Colonic mucosa (tissue), 4 donors: ENCODE measurements at regions of chr11 and their contacts with region 1.

Region 1: DNA sequence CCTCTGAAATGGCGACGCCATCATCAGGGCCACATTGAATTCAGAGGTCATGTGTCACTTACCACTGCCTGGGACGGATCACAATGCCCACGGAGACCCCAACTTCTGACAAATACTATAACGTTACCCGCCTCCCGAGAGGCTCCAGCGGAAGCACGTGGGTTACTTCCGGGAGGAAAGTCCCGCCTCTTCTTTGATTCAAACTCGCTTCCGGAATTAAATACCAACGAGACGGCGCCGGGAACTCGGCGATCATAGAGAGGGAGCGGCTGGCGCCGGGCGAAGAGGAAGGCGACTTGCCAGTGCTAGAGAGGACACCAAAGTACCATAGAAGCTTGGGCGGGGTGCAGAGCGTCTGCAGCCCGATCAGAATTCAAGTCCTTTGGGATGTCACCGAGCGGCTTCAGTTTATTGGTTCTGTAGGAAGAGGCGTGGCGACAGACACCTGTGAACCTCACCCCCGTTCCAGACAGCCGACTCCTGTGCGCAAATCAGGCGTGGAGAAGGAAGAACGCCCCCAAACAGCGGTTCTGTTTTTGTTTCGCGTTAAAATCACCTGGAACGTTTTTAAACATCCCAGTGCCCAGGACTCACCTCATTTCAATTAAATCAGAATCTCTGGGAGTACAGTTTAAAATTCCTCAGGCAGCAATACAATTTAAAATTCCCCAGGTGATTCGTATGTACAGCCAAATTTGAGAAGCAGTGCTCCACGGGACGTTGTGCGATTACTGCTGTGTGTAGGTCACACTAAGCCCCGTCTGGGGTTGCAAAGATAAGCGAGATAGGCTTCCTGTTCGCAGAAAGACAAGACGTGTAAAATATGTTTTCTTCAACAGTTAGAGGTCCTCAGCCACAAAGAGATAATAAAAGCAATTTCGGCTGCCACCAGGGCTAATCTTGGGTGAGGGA is at the start of gene TIMM10:
- DNase-seq: peak; percentile 96
- H3K4me3 ChIP-seq: peak within 1 kb of the TSS; percentile 67
- H3K27ac ChIP-seq: peak within 1 kb of the TSS; percentile 75
- H3K4me1 ChIP-seq: peaks cover 8% of the 10 kb centered on the region
- H3K27me3 ChIP-seq: no peaks in the 10 kb centered on the region
- CTCF ChIP-seq: no peak
- total RNA-seq, gene TIMM10: 54.8 to 67.1 TPM

Region 2: GRCh38 chr11:57426929-57427726 is 103.7 kb before region 1 on chr11 and contains the start of gene SLC43A3:
- intact Hi-C with region 1: no loop called
- DNase-seq: peak; percentile 76
- H3K4me3 ChIP-seq: peak within 1 kb of the TSS; percentile 47
- H3K27ac ChIP-seq: peak within 1 kb of the TSS; percentile 73
- H3K4me1 ChIP-seq: peaks cover 14% of the 10 kb centered on the region
- H3K27me3 ChIP-seq: no peaks in the 10 kb centered on the region
- CTCF ChIP-seq: no peak
- total RNA-seq, gene SLC43A3: 10.6 to 21.4 TPM

Region 3: DNA sequence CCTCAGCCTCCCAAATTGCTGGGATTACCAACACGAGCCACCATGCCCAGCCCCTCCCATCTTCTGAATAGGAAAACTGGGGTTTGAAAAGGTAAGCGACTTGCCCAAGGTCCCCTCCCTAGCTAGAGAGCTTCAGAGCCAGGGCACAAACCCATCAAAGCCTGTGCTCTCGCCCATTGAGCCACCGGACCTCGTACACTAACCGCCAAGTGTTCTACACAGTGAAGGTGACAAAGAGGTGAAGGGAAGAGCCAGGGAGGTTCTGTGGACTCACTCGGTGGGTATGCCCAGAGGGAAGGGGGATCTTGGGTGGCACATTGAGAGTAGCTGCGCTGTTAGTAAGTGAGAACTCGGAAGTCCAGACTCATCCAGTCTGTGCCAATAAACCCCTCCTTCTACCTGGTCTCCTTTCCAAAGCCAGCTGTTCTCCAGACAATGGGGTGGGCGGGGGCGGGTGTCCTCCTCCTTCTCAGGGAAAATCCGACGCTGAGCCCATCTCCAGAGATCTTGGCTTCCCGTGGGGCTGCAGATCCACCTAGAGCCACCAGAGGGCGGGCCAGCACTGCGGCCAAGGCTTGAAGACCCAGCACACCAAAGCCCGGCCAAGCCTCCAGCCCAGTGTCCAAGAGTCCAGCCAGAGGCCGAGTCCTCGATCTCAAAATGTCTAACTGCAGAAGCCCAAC is 73.8 kb before region 1 on chr11:
- intact Hi-C with region 1: loop called (anchors 5 kb)
- DNase-seq: peak; percentile 92
- H3K4me3 ChIP-seq: no peak overlapping the region
- H3K27ac ChIP-seq: no peak overlapping the region
- H3K4me1 ChIP-seq: peaks cover 15% of the 10 kb centered on the region
- H3K27me3 ChIP-seq: peaks cover 35% of the 10 kb centered on the region
- CTCF ChIP-seq: peak; percentile 99

Region 4: DNA sequence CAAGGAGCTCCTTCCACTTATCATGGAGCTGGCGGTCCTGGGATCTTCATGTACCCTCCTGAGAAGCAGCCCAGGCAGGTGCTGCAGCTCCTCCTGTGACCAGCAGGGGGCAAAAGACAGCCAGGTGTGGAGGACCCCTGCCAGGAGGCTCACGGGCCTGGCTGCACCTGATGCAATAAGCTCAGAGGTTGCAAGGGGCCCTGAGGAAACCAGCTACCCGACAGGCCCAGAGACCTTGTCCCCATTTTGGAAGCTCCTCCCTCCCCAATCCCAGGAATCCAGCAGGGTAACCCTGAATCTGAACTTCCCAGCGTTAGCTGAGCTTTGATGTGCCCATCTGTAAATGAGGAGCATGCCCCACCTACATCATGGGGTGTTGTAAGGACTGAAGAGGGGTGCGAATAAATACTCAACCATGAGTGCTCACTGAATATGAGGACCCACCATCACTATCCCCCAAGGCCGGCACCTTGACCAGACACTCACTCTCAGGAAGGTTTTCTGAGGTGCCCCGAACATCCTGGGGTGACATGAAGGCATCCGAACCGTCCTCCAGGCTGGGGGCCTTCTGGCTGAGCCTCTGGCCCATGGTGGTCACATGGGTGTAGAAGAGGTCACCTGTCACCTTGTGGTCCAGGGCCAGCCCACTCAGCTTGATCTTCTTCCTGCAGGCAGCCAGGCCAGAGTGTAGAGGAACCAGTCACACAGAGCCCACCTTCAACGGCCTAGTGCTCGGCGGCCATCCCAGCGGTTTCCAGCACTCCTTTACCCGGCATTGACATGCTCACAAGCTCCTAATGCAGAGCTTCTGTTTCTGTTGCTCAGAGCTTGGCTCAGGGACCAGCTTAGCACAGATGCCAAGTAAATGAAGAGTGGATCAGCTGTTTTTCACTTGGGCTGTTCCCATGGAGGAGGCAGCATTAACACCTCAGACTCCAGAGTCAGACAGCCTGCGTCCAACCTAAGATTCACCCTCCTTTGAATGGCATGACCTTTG is 37.0 kb before region 1 on chr11:
- intact Hi-C with region 1: loop called (anchors 2 kb)
- DNase-seq: peak; percentile 65
- H3K4me3 ChIP-seq: no peak overlapping the region
- H3K27ac ChIP-seq: no peak overlapping the region
- H3K4me1 ChIP-seq: no peaks in the 10 kb centered on the region
- H3K27me3 ChIP-seq: no peaks in the 10 kb centered on the region
- CTCF ChIP-seq: peak; percentile 96

Region 5: DNA sequence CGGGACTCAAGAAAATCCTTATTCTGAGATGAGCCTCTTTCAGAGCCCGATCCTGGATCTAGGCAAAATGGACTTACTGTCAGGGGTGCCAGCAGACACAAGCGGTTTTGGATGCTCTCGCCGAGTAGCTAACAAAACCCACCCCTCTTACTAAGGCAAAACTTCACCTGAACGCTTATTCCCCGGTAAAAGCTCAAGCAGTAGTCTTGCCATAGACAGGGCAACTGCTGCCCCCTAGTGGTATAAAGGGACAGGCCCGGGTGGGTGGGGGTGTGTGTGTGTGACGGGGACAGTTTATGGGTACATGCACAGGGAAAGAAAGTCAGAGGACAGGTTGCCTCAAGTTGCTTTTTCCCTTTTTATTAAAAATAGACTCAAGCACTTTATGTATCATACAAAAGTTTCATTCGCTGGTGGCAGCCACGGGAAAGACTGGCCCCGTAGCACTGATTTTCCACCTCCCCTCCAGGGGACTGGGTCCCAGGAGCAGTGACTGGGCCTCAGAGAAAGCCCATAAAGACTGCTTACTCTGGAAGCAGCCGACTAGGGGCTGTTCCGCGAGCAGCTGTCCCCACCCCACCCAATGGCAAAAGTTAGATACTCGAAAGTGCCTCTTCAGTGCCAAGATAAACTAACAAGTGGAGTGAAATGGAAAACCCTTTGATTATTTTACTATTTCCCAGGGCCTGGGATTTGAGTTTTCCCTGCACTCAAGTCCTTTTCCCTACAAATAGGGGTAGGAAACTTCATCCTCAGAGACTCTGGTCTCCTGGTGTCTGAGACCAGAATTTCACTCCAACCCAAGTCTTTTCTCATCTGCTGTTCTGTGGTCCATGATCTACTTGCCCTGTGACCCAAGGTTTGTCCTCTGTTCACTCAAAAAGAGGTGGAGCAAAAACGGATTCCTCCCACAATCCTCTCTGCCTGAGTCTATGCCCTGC is 114.2 kb after region 1 on chr11:
- intact Hi-C with region 1: loop called (anchors 10 kb)
- DNase-seq: peak; percentile 92
- H3K4me3 ChIP-seq: no peak overlapping the region
- H3K27ac ChIP-seq: no peak overlapping the region
- H3K4me1 ChIP-seq: no peaks in the 10 kb centered on the region
- H3K27me3 ChIP-seq: peaks cover 36% of the 10 kb centered on the region
- CTCF ChIP-seq: peak; percentile 84